Caco-2 (cell line): ENCODE measurements at regions of chr6 and their contacts with region 1.

Region 1: DNA sequence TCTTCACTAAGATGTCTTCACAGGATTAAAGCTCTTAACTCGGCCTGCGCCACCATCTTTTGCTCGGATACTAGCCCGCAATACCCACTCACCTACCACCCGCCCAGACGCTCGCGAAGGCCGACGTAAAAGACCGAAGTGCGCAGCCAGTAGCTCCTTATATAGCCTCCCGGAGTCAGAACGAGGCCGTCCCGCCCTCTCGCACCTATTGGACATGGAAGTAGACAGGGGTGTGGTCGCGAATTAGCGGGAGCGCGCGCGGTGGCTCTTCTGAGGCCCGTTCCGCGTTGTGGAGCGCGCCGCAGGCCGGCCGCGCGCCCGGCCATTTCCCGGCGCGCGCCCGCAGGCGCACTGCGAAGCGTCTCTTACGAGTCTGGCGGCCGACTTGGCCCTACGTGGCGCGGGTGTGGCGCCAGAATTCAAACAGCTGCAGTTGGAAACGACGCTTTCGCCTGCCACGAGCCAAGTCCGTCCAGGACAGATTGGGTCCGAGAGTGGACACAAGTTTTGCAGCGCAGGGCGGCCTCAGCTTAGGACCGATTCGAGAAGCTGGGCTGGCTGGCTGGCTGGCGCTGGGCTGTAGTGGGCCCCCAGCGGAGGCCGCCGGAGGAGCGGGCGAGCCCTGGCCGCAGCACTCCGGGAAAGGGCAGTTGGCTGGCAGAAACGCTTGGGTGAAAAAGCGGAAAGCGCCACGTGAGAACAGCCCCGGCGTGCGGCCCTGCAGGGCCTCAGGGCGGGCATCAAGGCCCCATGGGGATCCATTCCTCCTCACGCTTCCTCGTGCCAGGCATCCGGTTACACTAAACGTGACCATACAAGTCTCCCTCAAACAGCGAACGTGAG is 36.1 kb upstream of the SYNCRIP start:
- DNase-seq: peak; percentile 97
- H3K4me3 ChIP-seq: peak overlapping the region; percentile 89
- H3K4me3 Mint-ChIP-seq: peak overlapping the region; percentile 99
- H3K27ac Mint-ChIP-seq: peak overlapping the region; percentile 98
- H3K4me1 ChIP-seq: no peaks in the 10 kb centered on the region
- H3K4me1 Mint-ChIP-seq: peaks cover 26% of the 10 kb centered on the region
- H3K27me3 ChIP-seq: no peaks in the 10 kb centered on the region
- H3K27me3 Mint-ChIP-seq: peaks cover 2% of the 10 kb centered on the region
- CTCF ChIP-seq: no peak

Region 2: GRCh38 chr6:85023721-85024120 is 655.1 kb before region 1 on chr6:
- CTCF ChIA-PET with region 1: no interaction called
- POLR2A ChIA-PET with region 1: no interaction called
- intact Hi-C with region 1: no loop called
- DNase-seq: no peak
- H3K4me3 ChIP-seq: no peak overlapping the region
- H3K4me3 Mint-ChIP-seq: no peak overlapping the region
- H3K27ac Mint-ChIP-seq: no peak overlapping the region
- H3K4me1 ChIP-seq: no peaks in the 10 kb centered on the region
- H3K4me1 Mint-ChIP-seq: no peaks in the 10 kb centered on the region
- H3K27me3 ChIP-seq: no peaks in the 10 kb centered on the region; the same call in 1 of the 2 replicates
- H3K27me3 Mint-ChIP-seq: peaks cover 3% of the 10 kb centered on the region
- CTCF ChIP-seq: no peak

Region 3: DNA sequence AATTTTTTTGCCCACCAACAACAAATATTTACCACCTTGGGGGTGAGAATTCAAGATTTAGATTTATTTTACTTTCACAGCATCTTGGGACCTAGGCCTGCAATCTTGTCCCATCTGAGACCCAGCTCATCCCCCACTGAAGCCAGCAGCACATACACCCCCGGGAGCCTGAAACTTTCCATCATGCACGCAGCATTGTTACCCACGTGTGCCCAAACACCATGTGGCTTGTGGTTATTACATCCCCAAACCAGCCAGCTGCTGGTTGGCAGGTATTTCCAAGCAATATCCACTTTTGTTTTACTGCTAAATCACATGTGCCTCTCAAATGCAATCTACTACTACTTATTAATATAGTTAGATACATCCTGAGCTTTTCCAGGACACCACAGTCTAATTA is 378.2 kb before region 1 on chr6:
- CTCF ChIA-PET with region 1: no interaction called
- POLR2A ChIA-PET with region 1: no interaction called
- intact Hi-C with region 1: no loop called
- DNase-seq: no peak
- H3K4me3 ChIP-seq: no peak overlapping the region
- H3K4me3 Mint-ChIP-seq: no peak overlapping the region
- H3K27ac Mint-ChIP-seq: no peak overlapping the region
- H3K4me1 ChIP-seq: no peaks in the 10 kb centered on the region
- H3K4me1 Mint-ChIP-seq: no peaks in the 10 kb centered on the region
- H3K27me3 ChIP-seq: no peaks in the 10 kb centered on the region
- H3K27me3 Mint-ChIP-seq: peaks cover 11% of the 10 kb centered on the region
- CTCF ChIP-seq: no peak

Region 4: GRCh38 chr6:85593438-85594196 is 85.2 kb before region 1 on chr6 and contains the start of gene SNX14:
- CTCF ChIA-PET with region 1: no interaction called
- POLR2A ChIA-PET with region 1: interaction called, 8 read pairs
- intact Hi-C with region 1: loop called (anchors 5 kb)
- DNase-seq: peak; percentile 93 to 94
- H3K4me3 ChIP-seq: peak within 1 kb of the TSS; percentile 88
- H3K4me3 Mint-ChIP-seq: peak within 1 kb of the TSS; percentile 88
- H3K27ac Mint-ChIP-seq: peak within 1 kb of the TSS; percentile 94
- H3K4me1 ChIP-seq: peaks cover 5% of the 10 kb centered on the region; the same call in 1 of the 2 replicates
- H3K4me1 Mint-ChIP-seq: peaks cover 12% of the 10 kb centered on the region
- H3K27me3 ChIP-seq: no peaks in the 10 kb centered on the region
- H3K27me3 Mint-ChIP-seq: no peaks in the 10 kb centered on the region
- CTCF ChIP-seq: no peak
- total RNA-seq, gene SNX14: 85.0 and 87.5 TPM in 2 replicates

Region 5: GRCh38 chr6:85764844-85765243 is 86.0 kb after region 1 on chr6:
- CTCF ChIA-PET with region 1: no interaction called
- POLR2A ChIA-PET with region 1: no interaction called
- intact Hi-C with region 1: no loop called
- DNase-seq: no peak
- H3K4me3 ChIP-seq: no peak overlapping the region
- H3K4me3 Mint-ChIP-seq: no peak overlapping the region
- H3K27ac Mint-ChIP-seq: no peak overlapping the region
- H3K4me1 ChIP-seq: no peaks in the 10 kb centered on the region
- H3K4me1 Mint-ChIP-seq: no peaks in the 10 kb centered on the region
- H3K27me3 ChIP-seq: no peaks in the 10 kb centered on the region
- H3K27me3 Mint-ChIP-seq: peaks cover 10% of the 10 kb centered on the region
- CTCF ChIP-seq: no peak

Region 6: DNA sequence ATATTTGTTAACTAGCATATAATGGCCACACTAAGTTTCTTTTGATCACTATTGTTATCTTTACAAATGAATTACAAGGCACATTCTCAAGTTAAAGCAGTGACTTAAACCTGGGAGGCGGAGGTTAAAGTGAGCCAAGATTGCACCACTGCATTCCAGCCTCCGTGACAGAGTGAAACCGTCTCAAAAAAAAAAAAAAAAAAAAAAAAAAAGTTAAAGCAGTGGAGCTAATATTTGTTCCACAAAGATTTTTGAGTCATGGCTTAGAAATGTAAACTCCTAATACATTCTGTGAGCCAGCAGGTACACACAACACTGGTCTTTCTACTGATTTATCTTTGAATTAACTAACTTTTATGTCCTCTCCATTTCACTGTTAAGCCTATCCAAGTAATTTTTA is 1036.9 kb after region 1 on chr6:
- CTCF ChIA-PET with region 1: no interaction called
- POLR2A ChIA-PET with region 1: no interaction called
- intact Hi-C with region 1: loop called (anchors 5 kb)
- DNase-seq: peak; percentile 74 to 75
- H3K4me3 ChIP-seq: no peak overlapping the region
- H3K4me3 Mint-ChIP-seq: no peak overlapping the region
- H3K27ac Mint-ChIP-seq: peak overlapping the region; percentile 92
- H3K4me1 ChIP-seq: peaks cover 19% of the 10 kb centered on the region
- H3K4me1 Mint-ChIP-seq: peaks cover 24% of the 10 kb centered on the region
- H3K27me3 ChIP-seq: no peaks in the 10 kb centered on the region
- H3K27me3 Mint-ChIP-seq: no peaks in the 10 kb centered on the region
- CTCF ChIP-seq: no peak